A673 (cell line): ENCODE measurements at regions of chr2 and their contacts with region 1.

Region 1: DNA sequence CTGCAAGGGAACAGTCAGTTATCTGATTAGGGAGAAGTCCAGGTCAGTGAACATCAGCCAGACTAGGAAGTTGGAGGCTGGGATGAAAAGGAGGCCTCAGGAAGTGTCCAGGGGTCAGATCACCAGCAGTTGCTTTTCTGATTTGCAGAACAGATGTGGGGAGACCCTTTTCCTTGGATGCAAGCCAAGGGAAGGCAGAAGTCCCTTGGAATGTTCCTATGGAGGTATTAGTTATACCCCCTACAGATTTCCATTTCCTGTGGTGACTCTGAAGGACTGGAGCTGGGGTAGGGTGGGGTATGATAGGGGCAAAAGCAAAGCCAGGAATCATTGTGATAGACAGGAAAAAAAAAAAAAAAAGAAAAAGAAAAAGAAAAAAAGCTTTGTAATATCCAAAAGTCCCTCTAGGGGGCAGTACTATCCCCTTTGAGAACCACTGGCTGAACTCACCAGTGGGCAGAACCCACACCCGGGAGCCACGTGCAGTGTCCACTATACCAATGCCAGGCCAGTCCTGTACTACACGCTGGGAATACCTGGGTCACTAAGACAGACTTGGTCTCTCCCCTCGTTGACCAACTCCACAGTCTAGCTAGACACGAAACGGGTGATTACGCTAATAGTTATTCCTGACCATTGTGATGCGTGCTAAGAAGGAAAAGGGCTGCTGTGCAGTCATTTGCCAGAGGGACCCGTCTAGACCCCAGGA is 7.4 kb downstream of the DYSF start:
- DNase-seq: peak; percentile 61
- H3K4me3 ChIP-seq: no peak overlapping the region
- H3K27ac ChIP-seq: no peak overlapping the region
- H3K4me1 ChIP-seq: no peaks in the 10 kb centered on the region
- H3K27me3 ChIP-seq: peaks cover 23% of the 10 kb centered on the region
- CTCF ChIP-seq: peak; percentile 82

Region 2: DNA sequence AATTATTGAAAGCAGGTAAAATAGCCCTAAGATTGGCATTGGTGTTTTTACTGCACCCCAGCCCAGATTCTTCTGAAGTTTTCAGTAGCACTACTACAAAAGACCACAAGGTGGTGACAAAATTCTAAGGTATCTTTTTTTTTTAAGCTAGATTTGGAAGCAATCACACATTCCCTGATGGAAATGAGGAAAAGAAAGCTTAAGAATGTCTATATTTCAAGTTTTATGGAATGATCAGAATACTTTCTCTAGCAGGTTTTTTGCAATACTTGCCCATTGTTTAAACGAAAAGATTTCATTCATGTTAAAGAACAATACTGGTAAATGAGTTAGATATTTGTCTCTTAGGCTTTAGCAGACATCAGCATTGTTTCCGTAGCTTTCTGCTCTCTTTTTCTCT is 161.2 kb before region 1 on chr2:
- CTCF ChIA-PET with region 1: interaction called, 10 read pairs
- POLR2A ChIA-PET with region 1: no interaction called
- intact Hi-C with region 1: no loop called
- DNase-seq: peak; percentile 48
- H3K4me3 ChIP-seq: no peak overlapping the region
- H3K27ac ChIP-seq: no peak overlapping the region
- H3K4me1 ChIP-seq: no peaks in the 10 kb centered on the region
- H3K27me3 ChIP-seq: no peaks in the 10 kb centered on the region
- CTCF ChIP-seq: peak; percentile 73

Region 3: GRCh38 chr2:71423817-71424420 is 36.8 kb before region 1 on chr2:
- CTCF ChIA-PET with region 1: interaction called, 13 read pairs
- POLR2A ChIA-PET with region 1: interaction called, 8 read pairs
- intact Hi-C with region 1: no loop called
- DNase-seq: peak; percentile 92
- H3K4me3 ChIP-seq: no peak overlapping the region
- H3K27ac ChIP-seq: no peak overlapping the region
- H3K4me1 ChIP-seq: peaks cover 24% of the 10 kb centered on the region
- H3K27me3 ChIP-seq: no peaks in the 10 kb centered on the region
- CTCF ChIP-seq: no peak

Region 4: GRCh38 chr2:71510196-71510807 is 49.6 kb after region 1 on chr2:
- CTCF ChIA-PET with region 1: interaction called, 14 read pairs
- POLR2A ChIA-PET with region 1: no interaction called
- intact Hi-C with region 1: loop called (anchors 1 kb)
- DNase-seq: peak; percentile 63
- H3K4me3 ChIP-seq: no peak overlapping the region
- H3K27ac ChIP-seq: no peak overlapping the region
- H3K4me1 ChIP-seq: no peaks in the 10 kb centered on the region
- H3K27me3 ChIP-seq: peaks cover 7% of the 10 kb centered on the region
- CTCF ChIP-seq: peak; percentile 86